A549 (cell line): ENCODE measurements at regions of chr10 and their contacts with region 1.

Region 1: GRCh38 chr10:102352066-102352715 is 43.3 kb upstream of the NFKB2 start:
- DNase-seq: peak; percentile 68
- ATAC-seq: peak; percentile 72 to 89; a peak in 5 of 6 replicates
- H3K4me3 ChIP-seq: no peak overlapping the region
- H3K27ac ChIP-seq: no peak overlapping the region
- H3K4me1 ChIP-seq: no peaks in the 10 kb centered on the region
- CTCF ChIP-seq: peak; percentile 93
- EP300 ChIP-seq: no peak
- POLR2A ChIP-seq: no peak
- RAD21 ChIP-seq: peak; percentile 75 to 80

Region 2: GRCh38 chr10:102167861-102168260 is 184.3 kb before region 1 on chr10:
- CTCF ChIA-PET with region 1: interaction called, 101 read pairs
- POLR2A ChIA-PET with region 1: interaction called, 3 read pairs
- DNase-seq: no peak
- ATAC-seq: 0 out of 6 replicates have a peak, but pooled peaks of 1 of the 2 experiments have one; percentile 12
- H3K4me3 ChIP-seq: no peak overlapping the region
- H3K27ac ChIP-seq: no peak overlapping the region
- H3K4me1 ChIP-seq: peaks cover 3% of the 10 kb centered on the region; the same call in 1 of the 3 replicates
- CTCF ChIP-seq: no peak
- EP300 ChIP-seq: no peak
- POLR2A ChIP-seq: no peak
- RAD21 ChIP-seq: no peak

Region 3: DNA sequence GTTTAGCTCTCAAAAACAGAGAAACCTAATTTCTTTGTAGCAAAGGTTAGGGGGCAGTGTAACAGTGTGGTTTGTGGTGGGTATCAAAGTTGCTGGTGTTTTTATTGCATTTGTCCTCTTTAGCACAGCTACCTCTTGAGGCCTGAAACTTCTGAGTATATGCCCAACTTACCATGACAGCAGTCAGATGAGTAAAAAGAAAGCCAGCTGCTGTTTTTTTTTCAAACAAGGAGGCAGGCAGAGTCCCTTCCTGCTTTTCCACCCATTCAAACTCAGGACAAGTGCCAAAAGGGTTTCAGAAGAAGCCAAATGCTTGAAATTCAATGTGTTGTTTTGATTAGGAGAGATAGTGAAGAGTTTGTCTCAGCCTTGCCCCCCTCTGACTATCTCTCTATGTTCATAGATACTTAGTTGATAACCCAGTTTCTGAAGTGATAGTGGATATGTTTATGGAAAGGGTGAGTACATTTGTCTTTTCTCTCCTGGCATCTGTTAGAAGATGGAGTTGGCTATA is 83.8 kb before region 1 on chr10:
- CTCF ChIA-PET with region 1: interaction called, 17 read pairs
- POLR2A ChIA-PET with region 1: no interaction called
- DNase-seq: no peak
- ATAC-seq: no peak
- H3K4me3 ChIP-seq: no peak overlapping the region
- H3K27ac ChIP-seq: no peak overlapping the region
- H3K4me1 ChIP-seq: no peaks in the 10 kb centered on the region
- CTCF ChIP-seq: no peak
- EP300 ChIP-seq: no peak
- POLR2A ChIP-seq: no peak
- RAD21 ChIP-seq: no peak

Region 4: DNA sequence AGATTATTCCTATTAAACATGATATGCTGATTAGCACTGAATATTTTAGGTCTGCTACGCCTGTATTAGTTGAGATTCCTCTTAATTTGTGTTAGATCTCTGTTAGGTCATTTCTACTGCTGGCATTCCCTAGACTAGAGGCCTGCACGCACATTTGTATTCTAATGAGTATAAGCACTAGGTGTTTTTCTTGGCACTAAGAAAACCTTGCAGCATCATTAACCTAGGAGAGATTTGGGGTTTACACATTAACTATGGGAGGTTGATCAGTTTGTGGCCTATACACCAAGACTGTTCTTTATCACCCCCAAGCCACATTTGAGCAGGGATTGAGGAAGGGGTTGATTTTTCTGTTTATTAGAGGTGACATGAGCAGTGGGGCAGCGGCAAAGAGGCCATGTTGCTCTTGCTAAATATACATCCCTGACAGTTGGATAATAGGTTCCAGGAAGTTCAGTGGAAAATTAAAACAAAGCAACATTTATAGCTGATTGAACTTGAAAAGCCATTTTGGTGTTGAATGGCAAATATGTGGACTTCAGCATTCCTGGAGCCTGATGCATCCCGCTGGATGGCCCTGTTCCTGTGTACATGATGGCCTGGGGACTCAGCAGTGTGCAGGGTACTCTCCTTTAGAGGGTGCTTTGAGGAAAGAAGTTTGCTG is 41.7 kb before region 1 on chr10:
- CTCF ChIA-PET with region 1: interaction called, 12 read pairs
- POLR2A ChIA-PET with region 1: no interaction called
- DNase-seq: peak in 1 of 2 experiments; percentile 21
- ATAC-seq: peak in 1 of 2 experiments; percentile 76; a peak in 4 of 6 replicates
- H3K4me3 ChIP-seq: no peak overlapping the region
- H3K27ac ChIP-seq: 0 out of 6 replicates have a peak overlapping the region, but pooled peaks of 1 of the 2 experiments have one; percentile 2
- H3K4me1 ChIP-seq: peaks cover 22% of the 10 kb centered on the region
- CTCF ChIP-seq: no peak
- EP300 ChIP-seq: no peak
- POLR2A ChIP-seq: no peak
- RAD21 ChIP-seq: no peak

Region 5: GRCh38 chr10:102368072-102368471 is 15.9 kb after region 1 on chr10:
- CTCF ChIA-PET with region 1: interaction called, 124 read pairs
- POLR2A ChIA-PET with region 1: no interaction called
- DNase-seq: peak in 1 of 2 experiments; percentile 48
- ATAC-seq: peak; percentile 51 to 78; a peak in 3 of 6 replicates
- H3K4me3 ChIP-seq: no peak overlapping the region
- H3K27ac ChIP-seq: peak overlapping the region; percentile 41 to 42; a peak in 4 of 6 replicates
- H3K4me1 ChIP-seq: peaks cover 22% of the 10 kb centered on the region
- CTCF ChIP-seq: no peak
- EP300 ChIP-seq: no peak
- POLR2A ChIP-seq: no peak
- RAD21 ChIP-seq: no peak

Region 6: DNA sequence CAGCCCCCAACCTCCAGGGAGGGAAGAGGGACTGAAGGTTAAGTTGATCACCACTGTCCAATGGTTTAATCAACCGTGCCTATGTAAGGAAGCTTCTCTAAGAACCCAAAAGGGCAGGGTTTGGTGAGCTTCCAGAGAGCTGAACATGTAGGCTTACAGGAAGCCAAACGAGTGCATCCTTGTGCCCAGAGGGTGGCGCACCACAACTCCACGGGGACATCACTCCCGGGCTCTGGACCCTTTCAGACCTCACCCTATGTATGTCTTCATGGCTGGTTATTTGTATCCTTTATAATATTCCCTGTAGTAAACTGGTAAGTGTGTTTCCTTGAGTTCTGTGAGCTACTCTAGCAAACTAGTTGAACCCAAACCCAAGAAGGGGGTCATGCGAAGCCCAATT is 31.9 kb after region 1 on chr10:
- CTCF ChIA-PET with region 1: interaction called, 44 read pairs
- POLR2A ChIA-PET with region 1: no interaction called
- DNase-seq: no peak
- ATAC-seq: peak in 1 of 2 experiments; percentile 63; a peak in 3 of 6 replicates
- H3K4me3 ChIP-seq: no peak overlapping the region
- H3K27ac ChIP-seq: no peak overlapping the region
- H3K4me1 ChIP-seq: no peaks in the 10 kb centered on the region
- CTCF ChIP-seq: no peak
- EP300 ChIP-seq: no peak
- POLR2A ChIP-seq: no peak
- RAD21 ChIP-seq: no peak

Region 7: GRCh38 chr10:102399217-102400089 is 47.3 kb after region 1 on chr10:
- CTCF ChIA-PET with region 1: interaction called, 23 read pairs
- POLR2A ChIA-PET with region 1: no interaction called
- DNase-seq: peak; percentile 79 to 90
- ATAC-seq: peak; percentile 39 to 62
- H3K4me3 ChIP-seq: peak overlapping the region; percentile 48
- H3K27ac ChIP-seq: peak overlapping the region; percentile 82 to 86
- H3K4me1 ChIP-seq: peaks cover 41% of the 10 kb centered on the region
- CTCF ChIP-seq: peak; percentile 97
- EP300 ChIP-seq: no peak
- POLR2A ChIP-seq: peak; percentile 58
- RAD21 ChIP-seq: peak; percentile 60 to 76; a peak in 4 of 5 replicates

Region 8: DNA sequence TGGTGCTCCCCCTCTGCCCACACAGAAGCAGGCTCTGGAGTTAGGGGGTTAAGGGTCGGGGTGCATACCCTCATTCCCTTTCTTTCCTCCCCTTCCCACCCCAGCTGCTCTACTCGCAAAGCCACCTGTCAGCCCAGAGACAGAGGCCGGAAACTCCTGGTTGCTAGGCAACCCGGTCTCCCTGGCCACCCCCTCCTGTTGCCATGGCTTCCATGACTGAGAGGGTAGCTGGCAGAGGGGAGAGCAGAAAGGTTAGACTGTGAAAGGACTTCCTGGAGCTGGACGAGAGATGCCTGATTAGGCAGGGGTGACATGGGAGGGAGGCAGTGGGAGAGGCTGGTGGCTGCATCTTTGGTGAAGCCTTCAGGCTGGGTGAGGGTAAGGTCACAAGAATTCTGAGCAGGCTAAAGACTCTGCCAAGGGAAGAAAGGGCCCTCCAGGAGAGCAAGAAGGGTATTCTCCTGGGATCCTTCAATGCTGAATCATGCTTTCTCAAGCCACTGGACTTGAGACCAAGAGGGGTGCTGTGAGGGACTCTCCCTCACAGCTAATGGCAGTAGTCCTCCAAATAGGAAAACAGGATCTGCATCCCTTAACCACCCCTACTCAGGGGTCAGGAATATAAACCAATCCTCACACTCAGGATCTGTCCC is 61.0 kb after region 1 on chr10:
- CTCF ChIA-PET with region 1: no interaction called
- POLR2A ChIA-PET with region 1: no interaction called
- DNase-seq: peak in 1 of 2 experiments; percentile 31
- ATAC-seq: no peak
- H3K4me3 ChIP-seq: no peak overlapping the region
- H3K27ac ChIP-seq: no peak overlapping the region
- H3K4me1 ChIP-seq: peaks cover 3% of the 10 kb centered on the region; the same call in 1 of the 3 replicates
- CTCF ChIP-seq: no peak
- EP300 ChIP-seq: no peak
- POLR2A ChIP-seq: no peak
- RAD21 ChIP-seq: no peak

Region 9: GRCh38 chr10:102870221-102870620 is 518.0 kb after region 1 on chr10:
- CTCF ChIA-PET with region 1: no interaction called
- POLR2A ChIA-PET with region 1: no interaction called
- DNase-seq: no peak
- ATAC-seq: peak in 1 of 2 experiments; percentile 6; a peak in 1 of 6 replicates
- H3K4me3 ChIP-seq: no peak overlapping the region; the same call in 2 of the 3 replicates
- H3K27ac ChIP-seq: 0 out of 6 replicates have a peak overlapping the region, but pooled peaks of 1 of the 2 experiments have one; percentile 77
- H3K4me1 ChIP-seq: 0 out of 3 replicates have a peak, but pooled peaks cover 4% of the 10 kb centered on the region
- CTCF ChIP-seq: no peak
- EP300 ChIP-seq: no peak
- POLR2A ChIP-seq: no peak
- RAD21 ChIP-seq: no peak